SK-N-SH (cell line): ENCODE measurements at regions of chr9 and their contacts with region 1.

Region 1: DNA sequence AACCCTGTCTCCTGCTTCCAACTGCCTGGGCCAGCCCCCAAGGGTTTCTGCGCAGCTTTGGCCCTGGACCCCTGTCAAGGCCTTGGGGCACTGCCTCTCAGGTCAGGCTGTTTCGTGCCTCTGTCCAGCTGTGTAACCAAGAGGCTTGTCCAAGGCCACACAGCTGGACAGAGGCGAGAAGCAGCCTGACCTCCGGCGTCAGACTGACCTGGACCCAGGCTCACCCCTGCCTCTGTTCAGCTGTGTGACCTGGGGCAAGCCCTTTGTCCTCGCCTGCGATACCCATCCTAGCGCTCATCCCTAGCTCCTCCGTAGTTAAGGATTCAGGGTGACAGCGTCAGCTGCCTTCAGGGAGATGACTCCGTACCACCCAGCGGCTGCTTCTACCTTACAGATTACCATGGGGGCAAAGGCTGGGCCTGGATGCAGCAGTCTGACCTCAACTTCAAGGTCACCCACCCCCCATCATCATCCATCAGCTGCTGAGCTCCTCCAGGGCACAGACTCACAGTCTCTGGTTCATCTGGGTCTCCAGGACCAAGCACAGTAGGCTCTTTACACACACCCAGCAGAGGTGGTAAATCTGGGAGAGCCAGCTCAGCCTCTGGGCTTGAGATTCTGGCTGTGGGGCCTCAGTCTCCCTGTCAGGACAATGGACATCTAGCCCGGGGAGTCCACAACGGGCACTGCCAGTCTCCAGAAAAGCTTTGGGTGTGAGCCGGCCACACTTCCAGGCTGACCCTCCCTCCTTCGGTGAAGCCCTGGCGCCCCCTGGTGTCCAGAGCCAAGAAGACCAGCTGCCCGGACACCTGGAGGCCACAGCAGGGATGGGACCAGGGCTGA is 7.9 kb downstream of the AK1 start:
- DNase-seq: peak; percentile 97
- H3K4me3 ChIP-seq: peak overlapping the region in 1 of 2 experiments; percentile 46; a peak in 1 of 4 replicates
- H3K27ac ChIP-seq: no peak overlapping the region
- H3K4me1 ChIP-seq: peaks cover 0 to 12% of the 10 kb centered on the region in 2 experiments; a peak in 1 of 4 replicates
- H3K27me3 ChIP-seq: no peaks in the 10 kb centered on the region
- CTCF ChIP-seq: peak; percentile 83
- EP300 ChIP-seq: no peak
- RAD21 ChIP-seq: peak; percentile 95

Region 2: DNA sequence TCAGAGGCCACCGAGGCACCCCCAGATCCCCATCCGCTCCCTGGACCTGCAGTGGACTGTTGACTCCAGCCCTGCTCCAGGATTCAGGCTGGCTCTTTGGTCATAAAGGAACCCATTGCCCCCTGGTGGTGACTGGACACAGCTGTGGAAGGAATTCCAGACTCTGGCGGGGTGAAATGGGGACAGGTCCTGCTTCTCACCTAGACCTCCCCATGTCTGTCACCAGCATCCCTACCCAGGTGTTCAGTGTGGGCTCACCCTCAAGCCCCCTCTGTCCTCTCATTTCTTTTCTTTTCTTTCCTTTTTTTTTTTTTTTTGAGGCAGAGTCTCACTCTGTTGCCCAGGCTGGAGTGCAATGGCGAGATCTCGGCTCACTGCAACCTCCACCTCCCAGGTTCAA is 283.0 kb before region 1 on chr9:
- CTCF ChIA-PET with region 1: interaction called, 12 read pairs
- POLR2A ChIA-PET with region 1: no interaction called
- DNase-seq: peak; percentile 87
- H3K4me3 ChIP-seq: no peak overlapping the region; a peak in 1 of 4 replicates
- H3K27ac ChIP-seq: no peak overlapping the region
- H3K4me1 ChIP-seq: no peaks in the 10 kb centered on the region; a peak in 1 of 4 replicates
- H3K27me3 ChIP-seq: no peaks in the 10 kb centered on the region
- CTCF ChIP-seq: peak; percentile 87
- EP300 ChIP-seq: no peak
- RAD21 ChIP-seq: peak; percentile 93

Region 3: GRCh38 chr9:127779136-127779981 is 90.2 kb before region 1 on chr9:
- CTCF ChIA-PET with region 1: interaction called, 87 read pairs
- POLR2A ChIA-PET with region 1: no interaction called
- DNase-seq: peak; percentile 41
- H3K4me3 ChIP-seq: no peak overlapping the region
- H3K27ac ChIP-seq: no peak overlapping the region; a peak in 1 of 4 replicates
- H3K4me1 ChIP-seq: peaks cover 0 to 18% of the 10 kb centered on the region in 2 experiments; a peak in 1 of 4 replicates
- H3K27me3 ChIP-seq: no peaks in the 10 kb centered on the region
- CTCF ChIP-seq: no peak
- EP300 ChIP-seq: no peak
- RAD21 ChIP-seq: no peak

Region 4: DNA sequence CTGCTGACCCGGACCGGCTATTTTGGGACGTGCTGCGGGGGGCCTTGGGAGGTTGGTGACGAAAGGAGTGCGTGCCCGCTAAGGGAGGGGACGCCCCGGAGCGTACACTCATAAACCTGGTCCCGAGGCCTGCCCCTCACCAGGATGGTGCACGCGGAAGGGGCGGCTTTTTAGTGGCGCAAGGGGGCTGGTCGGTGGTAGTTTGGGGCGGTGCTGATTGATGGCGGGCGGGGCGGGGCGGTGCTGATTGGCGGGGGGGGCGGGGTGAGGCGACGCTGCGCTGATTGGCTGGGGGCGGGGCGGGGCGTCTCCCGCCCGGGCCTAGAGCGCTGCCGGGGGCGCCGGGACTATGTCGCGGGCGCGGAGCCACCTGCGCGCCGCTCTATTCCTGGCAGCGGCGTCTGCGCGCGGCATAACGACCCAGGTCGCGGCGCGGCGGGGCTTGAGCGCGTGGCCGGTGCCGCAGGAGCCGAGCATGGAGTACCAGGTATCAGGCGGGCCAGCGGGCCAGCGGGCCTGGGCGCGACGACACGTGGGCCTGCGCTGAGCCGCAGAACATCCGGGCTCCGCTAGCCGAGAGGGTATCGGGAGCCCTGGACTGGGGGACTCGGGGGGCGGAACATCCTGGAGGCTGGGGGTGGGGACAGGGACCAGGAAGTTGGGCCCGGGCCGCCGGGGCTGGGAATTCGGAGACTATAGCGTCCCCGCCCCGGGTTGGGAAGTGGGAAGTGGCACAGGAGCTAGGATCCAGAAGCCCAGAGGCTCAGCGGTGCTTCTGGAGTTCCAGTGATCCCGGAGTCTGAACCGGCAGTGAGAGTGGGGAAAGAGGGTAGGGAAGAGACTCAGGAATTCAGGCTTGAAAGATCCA is 66.7 kb before region 1 on chr9 and contains the start of gene FPGS:
- CTCF ChIA-PET with region 1: interaction called, 17 read pairs
- POLR2A ChIA-PET with region 1: interaction called, 3 read pairs
- DNase-seq: peak; percentile 98
- H3K4me3 ChIP-seq: peak within 1 kb of the TSS; percentile 76 to 87
- H3K27ac ChIP-seq: peak within 1 kb of the TSS; percentile 86 to 92
- H3K4me1 ChIP-seq: peaks cover 13 to 16% of the 10 kb centered on the region in 2 experiments; a peak in 3 of 4 replicates
- H3K27me3 ChIP-seq: no peaks in the 10 kb centered on the region
- CTCF ChIP-seq: 0 out of 2 replicates have a peak, but pooled peaks have one; percentile 1
- EP300 ChIP-seq: no peak
- RAD21 ChIP-seq: no peak
- polyA plus RNA-seq, gene FPGS: 82.3 and 82.7 TPM in 2 replicates

Region 5: DNA sequence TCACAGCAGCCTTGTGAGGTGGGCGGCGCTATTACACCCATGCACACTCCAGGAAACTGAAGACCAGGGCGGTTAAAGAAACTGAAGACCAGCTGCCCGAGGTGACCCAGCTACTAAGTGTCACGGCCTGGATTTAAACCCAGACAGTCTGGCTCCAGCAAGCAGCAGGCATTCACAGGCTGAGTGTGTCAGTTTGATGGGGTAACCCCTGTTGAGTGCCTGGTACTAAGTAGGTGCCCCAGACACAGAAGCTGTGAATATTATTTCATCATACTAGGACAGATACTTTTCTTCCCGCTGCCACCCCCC is 22.4 kb before region 1 on chr9:
- CTCF ChIA-PET with region 1: interaction called, 116 read pairs
- POLR2A ChIA-PET with region 1: no interaction called
- DNase-seq: no peak
- H3K4me3 ChIP-seq: no peak overlapping the region
- H3K27ac ChIP-seq: peak overlapping the region in 1 of 2 experiments; percentile 64; a peak in 1 of 4 replicates
- H3K4me1 ChIP-seq: peaks cover 5 to 10% of the 10 kb centered on the region in 2 experiments; a peak in 2 of 4 replicates
- H3K27me3 ChIP-seq: no peaks in the 10 kb centered on the region
- CTCF ChIP-seq: no peak
- EP300 ChIP-seq: no peak
- RAD21 ChIP-seq: no peak

Region 6: DNA sequence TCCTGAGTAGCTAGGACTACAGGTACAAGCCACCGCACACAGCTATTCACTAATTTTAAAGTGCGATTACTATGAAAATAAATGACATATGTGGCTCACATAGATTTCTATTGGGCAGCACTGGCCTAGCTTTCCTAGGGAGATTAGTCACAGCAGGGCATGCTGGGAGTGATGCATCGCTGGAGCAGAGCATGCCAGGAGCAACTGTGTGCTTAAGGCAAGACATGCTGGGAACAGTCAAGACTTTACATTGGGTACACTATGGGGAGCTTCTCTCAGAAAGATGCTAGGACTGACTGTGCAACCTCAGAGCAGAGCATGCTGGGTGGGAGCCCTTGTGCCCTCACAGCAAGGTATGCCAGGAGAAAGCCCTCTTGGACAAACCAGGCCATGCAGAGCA is 20.5 kb after region 1 on chr9:
- CTCF ChIA-PET with region 1: interaction called, 24 read pairs
- POLR2A ChIA-PET with region 1: interaction called, 4 read pairs
- DNase-seq: no peak
- H3K4me3 ChIP-seq: no peak overlapping the region
- H3K27ac ChIP-seq: no peak overlapping the region
- H3K4me1 ChIP-seq: peaks cover 0 to 4% of the 10 kb centered on the region in 2 experiments; a peak in 2 of 4 replicates
- H3K27me3 ChIP-seq: no peaks in the 10 kb centered on the region
- CTCF ChIP-seq: no peak
- EP300 ChIP-seq: no peak
- RAD21 ChIP-seq: no peak